RWPE1 (cell line): ENCODE measurements at regions of chr11 and their contacts with region 1.

Region 1: GRCh38 chr11:46700241-46701077 is at the starts of genes ARHGAP1 and ZNF408:
- DNase-seq: peak; percentile 93
- H3K27ac ChIP-seq: peak within 1 kb of the TSS; percentile 89
- CTCF ChIP-seq: no peak

Region 2: DNA sequence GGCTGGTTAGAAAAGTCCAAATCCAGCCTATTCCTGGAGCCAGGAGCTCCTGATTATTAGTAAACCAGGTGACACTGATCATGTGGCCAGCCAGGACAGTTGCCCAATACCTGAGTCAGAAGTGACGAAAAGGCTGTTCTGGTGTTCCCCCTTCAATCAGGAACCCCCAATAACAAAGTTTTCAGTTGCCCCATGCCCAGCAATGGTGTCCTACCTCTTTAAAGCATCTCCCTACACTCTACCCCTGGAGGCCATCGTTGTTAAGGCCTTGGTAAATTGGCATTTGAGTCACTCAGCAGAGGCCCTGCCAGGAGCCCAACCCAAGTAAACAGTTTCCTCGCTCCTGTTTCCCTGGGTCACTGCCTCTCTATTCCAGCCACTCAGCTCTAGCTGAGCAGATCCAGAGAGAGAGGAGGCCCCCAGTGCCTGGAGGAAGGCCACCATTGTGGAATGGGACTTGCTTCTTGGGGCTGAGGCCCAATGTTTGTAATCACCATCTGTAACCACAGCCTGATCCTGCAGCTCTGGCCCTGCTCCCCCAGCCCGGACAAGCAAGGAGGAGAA is 25.1 kb before region 1 on chr11:
- CTCF ChIA-PET with region 1: no interaction called
- POLR2A ChIA-PET with region 1: interaction called, 10 read pairs
- DNase-seq: peak; percentile 71
- H3K27ac ChIP-seq: peak overlapping the region; percentile 85
- CTCF ChIP-seq: no peak

Region 3: DNA sequence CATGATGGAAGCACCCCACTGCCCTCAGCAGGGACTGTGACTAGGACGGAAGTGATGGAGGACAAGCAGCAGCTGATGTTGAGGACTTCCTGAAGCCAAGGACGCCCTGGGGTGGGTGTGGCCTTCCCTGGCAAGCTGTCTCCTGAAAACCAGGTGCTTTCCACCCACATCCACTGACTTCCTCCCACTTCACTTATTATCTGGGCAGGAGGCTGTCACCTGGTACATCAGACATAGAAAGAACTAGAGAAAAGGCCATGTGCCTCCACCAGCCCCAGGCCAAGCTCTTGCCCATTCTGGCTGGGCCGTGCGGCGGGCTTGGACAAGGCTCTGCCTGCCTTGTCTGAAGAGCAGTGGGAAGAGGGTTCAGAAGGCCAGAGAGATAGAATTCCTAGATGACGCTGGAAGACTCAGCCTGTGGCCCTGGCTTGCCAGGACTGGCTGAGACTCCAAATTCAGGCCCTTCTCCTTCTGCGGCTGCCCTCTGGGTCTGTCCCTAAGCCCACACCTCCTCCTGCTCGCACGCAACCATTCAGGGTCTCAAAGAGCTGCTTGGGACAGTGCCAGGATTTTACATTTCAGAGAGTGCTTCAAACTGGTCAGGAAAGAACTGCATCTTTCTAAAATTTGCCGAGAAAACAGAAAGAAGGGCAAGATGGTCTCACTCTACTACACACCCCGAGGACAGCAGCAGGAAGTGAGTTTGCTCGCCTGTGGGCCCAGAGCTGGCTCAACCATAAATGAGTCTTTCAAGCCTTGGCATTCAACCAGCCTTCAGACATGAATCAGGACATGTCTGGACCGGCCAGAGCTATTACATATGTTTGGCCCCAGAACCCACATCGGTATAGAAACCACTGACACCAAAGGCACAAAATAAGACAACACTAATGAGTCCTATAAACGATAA is 13.3 kb before region 1 on chr11:
- CTCF ChIA-PET with region 1: interaction called, 5 read pairs
- POLR2A ChIA-PET with region 1: interaction called, 28 read pairs
- DNase-seq: peak; percentile 84
- H3K27ac ChIP-seq: peak overlapping the region; percentile 99
- CTCF ChIP-seq: no peak

Region 4: DNA sequence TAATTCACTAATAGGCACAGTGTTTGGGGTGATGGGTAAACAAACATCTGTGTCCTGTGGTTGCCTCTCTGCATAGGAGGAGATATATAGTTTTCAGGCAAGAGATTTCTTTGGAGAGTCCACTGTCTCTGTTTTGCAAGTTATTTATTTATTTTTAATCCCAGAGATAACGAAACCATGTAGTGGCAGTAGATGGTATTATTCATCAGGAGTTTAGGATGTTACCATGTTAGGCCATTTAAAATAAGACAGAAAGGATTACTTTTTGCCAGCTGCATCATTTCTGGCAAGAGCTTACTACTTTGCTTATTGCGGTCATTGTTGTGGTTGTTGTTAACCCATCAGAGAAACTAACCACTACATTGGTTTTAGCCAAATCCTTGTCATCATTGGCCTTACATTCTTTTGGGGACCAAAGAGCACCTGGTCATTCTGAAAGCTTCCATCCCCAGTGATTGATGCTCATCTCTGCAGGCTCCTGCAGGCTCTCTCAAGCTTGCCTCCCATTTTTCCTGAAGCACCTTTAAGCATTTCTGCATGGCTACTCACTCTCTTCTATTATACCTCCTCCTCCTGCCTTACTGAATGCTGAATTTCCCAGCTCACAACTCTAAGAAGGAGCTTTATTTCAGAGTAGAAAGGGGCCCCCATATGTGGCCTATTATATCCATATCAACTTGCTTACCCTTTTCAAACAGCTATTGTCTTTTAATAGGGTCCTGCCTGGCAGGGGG is 320.5 kb after region 1 on chr11:
- CTCF ChIA-PET with region 1: no interaction called
- POLR2A ChIA-PET with region 1: no interaction called
- DNase-seq: no peak
- H3K27ac ChIP-seq: no peak overlapping the region
- CTCF ChIP-seq: no peak